ENCODE measurements at regions of chr1 and their contacts with region 1.

Region 1: GRCh38 chr1:162696286-162696862 is 64.1 kb downstream of the DDR2 start:
- DNase-seq: peak; percentile 65 to 78
- ATAC-seq: peak; percentile 98 to 99
- H3K4me3 ChIP-seq: peak overlapping the region in 1 of 4 donors; percentile 8
- H3K27ac ChIP-seq: peak overlapping the region; percentile 51 to 70 (median 68)
- H3K4me1 ChIP-seq: peaks cover 19 to 26% of the 10 kb centered on the region in 2 donors
- H3K27me3 ChIP-seq: no peaks in the 10 kb centered on the region
- CTCF ChIP-seq: no peak
- POLR2A ChIP-seq: no peak

Region 2: GRCh38 chr1:162633081-162633762 is 63.2 kb before region 1 on chr1:
- in situ Hi-C with region 1: no loop called
- intact Hi-C with region 1: loop called (anchors 5 kb)
- DNase-seq: no peak
- ATAC-seq: peak; percentile 24 to 25
- H3K4me3 ChIP-seq: peak overlapping the region; percentile 33 to 48 (median 42)
- H3K27ac ChIP-seq: peak overlapping the region; percentile 65 to 74 (median 68)
- H3K4me1 ChIP-seq: no peaks in the 10 kb centered on the region
- H3K27me3 ChIP-seq: no peaks in the 10 kb centered on the region
- CTCF ChIP-seq: no peak
- POLR2A ChIP-seq: no peak

Region 3: GRCh38 chr1:162649583-162649982 is 46.8 kb before region 1 on chr1:
- in situ Hi-C with region 1: no loop called
- intact Hi-C with region 1: no loop called
- DNase-seq: no peak
- ATAC-seq: no peak
- H3K4me3 ChIP-seq: no peak overlapping the region
- H3K27ac ChIP-seq: no peak overlapping the region
- H3K4me1 ChIP-seq: no peaks in the 10 kb centered on the region
- H3K27me3 ChIP-seq: no peaks in the 10 kb centered on the region
- CTCF ChIP-seq: no peak
- POLR2A ChIP-seq: no peak

Region 4: GRCh38 chr1:162772571-162773154 is 76.3 kb after region 1 on chr1:
- in situ Hi-C with region 1: no loop called
- intact Hi-C with region 1: no loop called
- DNase-seq: no peak
- ATAC-seq: peak; percentile 60
- H3K4me3 ChIP-seq: no peak overlapping the region
- H3K27ac ChIP-seq: no peak overlapping the region
- H3K4me1 ChIP-seq: no peaks in the 10 kb centered on the region
- H3K27me3 ChIP-seq: no peaks in the 10 kb centered on the region
- CTCF ChIP-seq: no peak
- POLR2A ChIP-seq: no peak